MCF 10A (cell line): ENCODE measurements at regions of chr7 and their contacts with region 1.

Region 1: GRCh38 chr7:6516387-6516983 is 34.8 kb downstream of the GRID2IP start:
- DNase-seq: peak; percentile 86
- H3K4me3 Mint-ChIP-seq: peak overlapping the region; percentile 51
- H3K27ac Mint-ChIP-seq: no peak overlapping the region
- H3K4me1 Mint-ChIP-seq: peaks cover 7% of the 10 kb centered on the region
- H3K27me3 Mint-ChIP-seq: no peaks in the 10 kb centered on the region
- CTCF ChIP-seq: peak; percentile 88

Region 2: DNA sequence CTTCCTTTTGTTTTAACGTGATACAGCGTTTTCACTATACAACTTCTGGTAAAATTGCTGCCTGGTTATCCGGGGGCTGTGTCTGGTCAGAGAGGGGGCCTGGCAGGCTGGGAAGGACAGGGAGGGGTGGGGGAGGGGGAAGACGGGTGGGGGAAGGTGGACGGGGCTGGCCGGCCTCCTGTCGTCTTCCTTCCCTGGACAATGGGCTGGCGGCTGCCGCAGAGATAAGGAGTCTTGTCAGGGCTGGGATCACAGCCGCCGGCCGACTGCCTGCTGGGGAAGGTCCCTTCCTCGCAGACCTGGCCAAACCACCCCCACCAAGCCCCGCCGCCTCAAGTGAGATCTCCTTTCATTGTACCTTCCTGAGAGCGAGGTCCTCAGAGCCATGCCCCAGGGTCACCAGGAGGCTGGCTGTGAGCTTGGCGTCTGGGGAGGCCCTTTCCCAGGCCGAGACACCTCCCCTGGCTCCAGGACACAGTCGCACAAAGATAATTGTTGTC is 941.7 kb before region 1 on chr7:
- CTCF ChIA-PET with region 1: no interaction called
- POLR2A ChIA-PET with region 1: no interaction called
- intact Hi-C with region 1: no loop called
- DNase-seq: no peak
- H3K4me3 Mint-ChIP-seq: no peak overlapping the region
- H3K27ac Mint-ChIP-seq: no peak overlapping the region
- H3K4me1 Mint-ChIP-seq: no peaks in the 10 kb centered on the region
- H3K27me3 Mint-ChIP-seq: no peaks in the 10 kb centered on the region
- CTCF ChIP-seq: no peak

Region 3: DNA sequence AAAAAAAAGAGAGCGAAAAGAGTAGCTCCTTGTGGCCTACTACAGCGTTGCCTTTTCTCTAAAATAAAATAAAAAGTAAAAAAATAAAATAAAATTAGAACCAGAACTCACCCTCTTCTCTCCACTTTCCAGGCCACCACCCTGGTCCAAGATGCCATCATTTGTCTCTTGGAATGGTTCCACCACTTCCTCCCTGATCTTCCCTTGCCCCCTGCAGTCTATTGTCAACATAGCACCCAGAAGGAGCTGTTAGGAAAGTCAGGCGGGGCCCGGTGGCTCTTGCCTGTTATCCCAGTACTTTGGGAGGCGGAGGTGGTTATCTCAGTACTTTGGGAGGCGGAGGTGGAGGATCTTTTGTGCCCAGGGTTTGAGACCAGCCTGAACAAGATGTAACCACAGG is 42.4 kb after region 1 on chr7:
- CTCF ChIA-PET with region 1: interaction called, 8 read pairs
- POLR2A ChIA-PET with region 1: no interaction called
- intact Hi-C with region 1: loop called (anchors 2 kb)
- DNase-seq: peak; percentile 65
- H3K4me3 Mint-ChIP-seq: no peak overlapping the region
- H3K27ac Mint-ChIP-seq: no peak overlapping the region
- H3K4me1 Mint-ChIP-seq: no peaks in the 10 kb centered on the region
- H3K27me3 Mint-ChIP-seq: no peaks in the 10 kb centered on the region
- CTCF ChIP-seq: peak; percentile 25

Region 4: GRCh38 chr7:6571160-6571779 is 54.8 kb after region 1 on chr7:
- CTCF ChIA-PET with region 1: interaction called, 10 read pairs
- POLR2A ChIA-PET with region 1: no interaction called
- intact Hi-C with region 1: loop called (anchors 5 kb)
- DNase-seq: peak; percentile 23
- H3K4me3 Mint-ChIP-seq: no peak overlapping the region
- H3K27ac Mint-ChIP-seq: no peak overlapping the region
- H3K4me1 Mint-ChIP-seq: peaks cover 5% of the 10 kb centered on the region
- H3K27me3 Mint-ChIP-seq: no peaks in the 10 kb centered on the region
- CTCF ChIP-seq: no peak

Region 5: GRCh38 chr7:6577365-6578113 is 61.1 kb after region 1 on chr7 and contains the start of gene ZDHHC4:
- CTCF ChIA-PET with region 1: interaction called, 10 read pairs
- POLR2A ChIA-PET with region 1: no interaction called
- intact Hi-C with region 1: loop called (anchors 5 kb)
- DNase-seq: peak; percentile 80
- H3K4me3 Mint-ChIP-seq: peak within 1 kb of the TSS; percentile 85
- H3K27ac Mint-ChIP-seq: peak within 1 kb of the TSS; percentile 95
- H3K4me1 Mint-ChIP-seq: peaks cover 10% of the 10 kb centered on the region
- H3K27me3 Mint-ChIP-seq: no peaks in the 10 kb centered on the region
- CTCF ChIP-seq: no peak
- total RNA-seq, gene ZDHHC4: 41.8 and 45.6 TPM in 2 replicates

Region 6: DNA sequence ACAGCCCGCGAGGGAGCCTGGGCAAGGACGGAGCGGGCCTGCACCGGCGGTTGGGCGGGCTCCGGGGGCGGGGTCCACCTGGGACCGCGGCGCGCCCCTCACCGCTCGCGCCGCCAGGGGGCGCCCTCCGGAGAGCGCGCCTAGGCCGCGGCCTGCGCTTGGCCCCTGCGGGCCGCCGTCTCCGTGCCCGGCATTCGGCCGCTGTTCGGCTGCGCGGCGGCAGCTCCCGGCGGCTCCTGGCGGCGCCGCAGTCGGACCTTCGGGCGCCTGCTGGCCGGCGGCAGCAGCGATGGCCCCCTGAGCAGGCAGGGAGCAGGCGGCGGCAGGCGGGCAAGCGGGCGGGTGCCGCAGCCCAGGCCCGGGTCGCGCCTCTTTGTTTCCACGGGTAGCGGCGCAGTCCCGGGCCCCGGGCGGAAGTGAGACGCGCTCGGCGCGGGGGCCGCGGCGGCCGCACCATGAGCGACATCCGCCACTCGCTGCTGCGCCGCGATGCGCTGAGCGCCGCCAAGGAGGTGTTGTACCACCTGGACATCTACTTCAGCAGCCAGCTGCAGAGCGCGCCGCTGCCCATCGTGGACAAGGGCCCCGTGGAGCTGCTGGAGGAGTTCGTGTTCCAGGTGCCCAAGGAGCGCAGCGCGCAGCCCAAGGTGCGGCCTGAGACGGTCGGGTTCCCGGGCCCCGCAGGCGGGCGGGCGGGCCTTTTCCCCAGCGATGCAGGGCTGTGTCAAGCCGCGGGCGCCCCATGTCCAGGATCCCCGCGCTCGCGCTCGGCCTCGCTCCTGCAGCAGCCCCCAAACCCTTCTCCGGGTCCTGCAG is 73.6 kb after region 1 on chr7 and contains the start of gene INTS15:
- CTCF ChIA-PET with region 1: interaction called, 12 read pairs
- POLR2A ChIA-PET with region 1: no interaction called
- intact Hi-C with region 1: no loop called
- DNase-seq: peak; percentile 73
- H3K4me3 Mint-ChIP-seq: peak within 1 kb of the TSS; percentile 99
- H3K27ac Mint-ChIP-seq: peak within 1 kb of the TSS; percentile 74
- H3K4me1 Mint-ChIP-seq: no peaks in the 10 kb centered on the region
- H3K27me3 Mint-ChIP-seq: no peaks in the 10 kb centered on the region
- CTCF ChIP-seq: peak; percentile 70
- total RNA-seq, gene INTS15: 25.4 and 26.5 TPM in 2 replicates

Region 7: GRCh38 chr7:6934986-6935385 is 418.5 kb after region 1 on chr7:
- CTCF ChIA-PET with region 1: interaction called, 14 read pairs
- POLR2A ChIA-PET with region 1: no interaction called
- intact Hi-C with region 1: no loop called
- DNase-seq: no peak
- H3K4me3 Mint-ChIP-seq: no peak overlapping the region
- H3K27ac Mint-ChIP-seq: no peak overlapping the region
- H3K4me1 Mint-ChIP-seq: peaks cover 11% of the 10 kb centered on the region
- H3K27me3 Mint-ChIP-seq: no peaks in the 10 kb centered on the region
- CTCF ChIP-seq: no peak

Region 8: GRCh38 chr7:7242899-7243298 is 726.4 kb after region 1 on chr7:
- CTCF ChIA-PET with region 1: no interaction called
- POLR2A ChIA-PET with region 1: no interaction called
- intact Hi-C with region 1: no loop called
- DNase-seq: no peak
- H3K4me3 Mint-ChIP-seq: no peak overlapping the region
- H3K27ac Mint-ChIP-seq: peak overlapping the region; percentile 39
- H3K4me1 Mint-ChIP-seq: peaks cover 11% of the 10 kb centered on the region
- H3K27me3 Mint-ChIP-seq: no peaks in the 10 kb centered on the region
- CTCF ChIP-seq: no peak